Posterior vena cava (tissue), 2 donors: ENCODE measurements at regions of chr12 and their contacts with region 1.

Region 1: GRCh38 chr12:127830065-127830460 is 436.9 kb upstream of the TMEM132C start:
- DNase-seq: no peak

Region 2: DNA sequence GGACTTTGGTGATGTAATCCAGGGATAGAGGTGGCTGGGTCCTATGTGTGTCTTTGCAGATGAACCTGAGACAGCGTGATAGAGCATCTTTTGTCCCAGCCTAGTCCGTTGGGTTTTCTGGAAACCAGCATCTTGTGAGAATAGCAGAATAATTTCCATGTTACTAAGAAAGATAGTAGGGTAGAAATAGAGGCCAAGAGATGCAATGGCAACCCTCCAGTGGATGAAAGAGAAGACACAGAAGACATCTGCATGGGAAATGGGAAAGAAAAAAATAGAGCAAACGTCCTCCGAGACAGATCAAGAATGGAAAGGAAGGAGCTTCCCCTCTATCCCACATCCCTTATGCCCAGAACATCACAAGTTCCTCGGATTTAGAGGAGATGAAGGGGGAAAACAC is 27.6 kb after region 1 on chr12:
- intact Hi-C with region 1: loop called in 1 of 2 experiments (anchors 1 kb)
- DNase-seq: no peak